ENCODE measurements at regions of chr12 and their contacts with region 1.

Region 1: GRCh38 chr12:52980693-52981423 is 25.4 kb upstream of the EIF4B start:
- DNase-seq: peak; percentile 89 to 90
- H3K4me3 ChIP-seq: no peak overlapping the region
- H3K27ac ChIP-seq: no peak overlapping the region
- H3K4me1 ChIP-seq: peaks cover 0 to under 1% (median 0%) of the 10 kb centered on the region in 4 donors
- H3K27me3 ChIP-seq: peaks cover 0 to 3% of the 10 kb centered on the region in 2 donors
- CTCF ChIP-seq: peak; percentile 89 to 99

Region 2: GRCh38 chr12:52372216-52373154 is 608.4 kb before region 1 on chr12:
- intact Hi-C with region 1: loop called (anchors 10 kb)
- DNase-seq: peak; percentile 80 to 92
- H3K4me3 ChIP-seq: no peak overlapping the region
- H3K27ac ChIP-seq: peak overlapping the region; percentile 64 to 67
- H3K4me1 ChIP-seq: peaks cover 0 to 19% (median 11%) of the 10 kb centered on the region in 4 donors
- H3K27me3 ChIP-seq: no peaks in the 10 kb centered on the region
- CTCF ChIP-seq: peak; percentile 77 to 86

Region 3: DNA sequence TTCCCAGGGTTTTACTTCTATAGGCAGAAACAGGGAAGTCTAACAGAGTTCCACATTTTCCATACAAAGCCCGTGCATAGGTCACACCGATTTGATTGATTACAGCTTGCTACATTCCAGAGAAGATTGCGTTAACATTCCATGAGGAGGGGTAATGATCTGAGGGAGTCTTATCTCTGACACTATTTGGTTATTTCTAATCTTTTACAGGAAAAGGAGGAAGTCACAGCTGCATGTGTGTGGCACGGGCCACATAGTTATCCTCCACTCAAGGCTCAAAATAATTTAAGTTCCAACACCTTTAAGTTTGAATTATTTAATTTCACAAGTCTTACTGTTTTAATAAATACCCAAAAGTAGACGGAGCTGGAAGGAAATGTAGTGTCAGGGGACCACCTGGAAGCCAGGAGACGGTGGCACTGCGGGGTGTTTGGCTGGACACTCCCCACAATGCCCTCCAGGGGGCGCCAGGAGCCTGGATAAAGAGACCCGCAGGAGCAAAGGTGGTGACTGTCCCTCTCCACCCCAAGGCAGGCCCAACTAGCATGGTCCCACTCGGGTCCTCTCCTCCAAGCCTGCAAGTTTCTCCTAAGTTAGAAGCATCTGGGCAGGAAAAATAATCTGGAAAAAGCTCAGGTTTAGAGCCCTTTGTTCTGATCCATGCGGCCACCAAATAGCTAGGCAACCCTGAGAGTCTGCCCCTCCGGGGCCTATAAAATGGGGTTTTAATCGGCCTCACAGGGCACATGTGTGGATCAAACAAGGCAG is 96.1 kb before region 1 on chr12:
- intact Hi-C with region 1: loop called (anchors 2 kb)
- DNase-seq: peak; percentile 69 to 84
- H3K4me3 ChIP-seq: no peak overlapping the region
- H3K27ac ChIP-seq: no peak overlapping the region
- H3K4me1 ChIP-seq: peaks cover 0 to 4% (median under 1%) of the 10 kb centered on the region in 4 donors
- H3K27me3 ChIP-seq: peaks cover 0 to 3% of the 10 kb centered on the region in 2 donors
- CTCF ChIP-seq: peak; percentile 91 to 96

Region 4: GRCh38 chr12:53025250-53025649 is 44.4 kb after region 1 on chr12:
- intact Hi-C with region 1: no loop called
- DNase-seq: no peak
- H3K4me3 ChIP-seq: no peak overlapping the region
- H3K27ac ChIP-seq: no peak overlapping the region
- H3K4me1 ChIP-seq: no peaks in the 10 kb centered on the region
- H3K27me3 ChIP-seq: no peaks in the 10 kb centered on the region
- CTCF ChIP-seq: no peak

Region 5: GRCh38 chr12:53151039-53151438 is 170.2 kb after region 1 on chr12:
- intact Hi-C with region 1: no loop called
- DNase-seq: no peak
- H3K4me3 ChIP-seq: no peak overlapping the region
- H3K27ac ChIP-seq: no peak overlapping the region
- H3K4me1 ChIP-seq: peaks cover 0 to 51% (median 8%) of the 10 kb centered on the region in 4 donors
- H3K27me3 ChIP-seq: no peaks in the 10 kb centered on the region
- CTCF ChIP-seq: no peak

Region 6: DNA sequence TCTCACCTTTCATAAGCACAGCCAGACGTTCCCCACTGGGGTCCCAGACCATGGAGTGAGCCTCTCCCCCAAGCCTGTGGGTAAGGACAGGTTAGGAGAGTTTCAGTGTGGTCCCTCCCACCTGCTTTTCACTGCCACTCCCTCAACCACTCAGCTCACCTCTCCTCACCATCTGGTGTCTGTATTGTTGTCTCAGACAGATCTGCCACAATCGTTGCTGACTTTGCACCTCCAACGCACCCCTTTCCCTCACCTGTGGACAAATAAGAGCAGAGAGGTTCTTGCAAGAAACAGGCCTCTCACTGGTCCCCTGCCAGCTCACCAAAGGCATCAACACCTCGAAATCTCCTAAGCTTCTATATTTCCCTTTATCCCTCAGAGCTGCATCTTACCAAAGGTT is 327.4 kb after region 1 on chr12:
- intact Hi-C with region 1: no loop called
- DNase-seq: no peak
- H3K4me3 ChIP-seq: no peak overlapping the region
- H3K27ac ChIP-seq: no peak overlapping the region
- H3K4me1 ChIP-seq: no peaks in the 10 kb centered on the region
- H3K27me3 ChIP-seq: no peaks in the 10 kb centered on the region
- CTCF ChIP-seq: no peak